ENCODE measurements at regions of chr3 and their contacts with region 1.

Region 1: DNA sequence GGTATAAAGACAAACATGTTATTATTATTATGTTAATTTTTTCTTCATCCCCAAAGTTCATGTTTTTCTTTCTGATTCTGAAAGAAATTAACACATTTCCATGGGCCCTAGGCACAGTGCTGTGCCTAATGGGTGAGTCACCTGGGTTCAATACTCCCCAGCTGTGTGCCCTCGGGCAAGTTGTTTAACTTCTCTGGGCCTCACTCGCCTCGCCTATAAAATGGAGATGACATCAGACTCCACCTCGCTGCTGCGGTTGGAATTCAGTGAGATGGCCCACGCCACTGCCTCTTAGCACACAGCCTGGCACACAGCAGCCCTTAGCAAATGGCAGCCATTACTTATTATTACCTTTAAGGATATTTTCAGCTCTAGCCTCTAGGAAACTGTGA is 22.6 kb downstream of the DNASE1L3 start:
- DNase-seq: no peak
- ATAC-seq: peak; percentile 35
- H3K4me3 ChIP-seq: no peak overlapping the region
- H3K27ac ChIP-seq: no peak overlapping the region
- H3K4me1 ChIP-seq: peaks cover 3% of the 10 kb centered on the region; the same call in 1 of the 2 replicates
- H3K27me3 ChIP-seq: no peaks in the 10 kb centered on the region
- CTCF ChIP-seq: no peak
- EP300 ChIP-seq: no peak
- POLR2A ChIP-seq: no peak
- RAD21 ChIP-seq: no peak

Region 2: DNA sequence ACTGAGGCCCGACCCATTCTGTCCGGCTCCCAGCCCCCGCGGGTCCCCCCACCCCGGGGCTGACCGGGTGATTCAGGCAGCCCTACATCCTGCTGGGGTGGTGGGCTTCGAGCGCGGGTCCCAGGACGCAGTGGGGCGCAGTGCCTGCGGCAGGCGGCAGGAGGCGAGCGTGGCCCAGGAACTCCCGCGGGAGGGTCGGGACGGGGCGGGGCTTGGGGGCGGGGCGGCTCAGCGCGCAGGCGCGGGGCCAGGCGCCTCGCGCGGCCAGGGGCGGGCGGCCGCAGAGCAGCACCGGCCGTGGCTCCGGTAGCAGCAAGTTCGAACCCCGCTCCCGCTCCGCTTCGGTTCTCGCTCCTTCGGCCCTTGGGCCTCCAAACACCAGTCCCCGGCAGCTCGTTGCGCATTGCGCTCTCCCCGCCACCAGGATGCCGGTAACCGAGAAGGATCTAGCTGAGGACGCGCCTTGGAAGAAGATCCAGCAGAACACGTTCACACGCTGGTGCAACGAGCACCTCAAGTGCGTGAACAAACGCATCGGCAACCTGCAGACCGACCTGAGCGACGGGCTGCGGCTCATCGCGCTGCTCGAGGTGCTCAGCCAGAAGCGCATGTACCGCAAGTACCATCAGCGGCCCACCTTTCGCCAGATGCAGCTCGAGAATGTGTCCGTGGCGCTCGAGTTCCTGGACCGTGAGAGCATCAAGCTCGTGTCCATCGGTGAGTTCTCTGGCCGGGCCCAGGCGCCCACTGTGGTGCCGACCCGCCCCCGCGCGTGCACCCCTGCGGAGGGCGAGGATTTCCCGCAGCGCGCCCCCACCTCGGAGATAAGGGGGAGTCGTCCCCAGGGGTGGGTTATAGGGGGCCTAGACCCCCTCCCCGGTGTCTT is 179.8 kb before region 1 on chr3 and contains the start of gene FLNB:
- CTCF ChIA-PET with region 1: interaction called, 11 read pairs
- POLR2A ChIA-PET with region 1: interaction called, 3 read pairs
- RAD21 ChIA-PET with region 1: interaction called, 13 read pairs
- SMC1A ChIA-PET with region 1: interaction called, 3 read pairs
- in situ Hi-C with region 1: no loop called
- intact Hi-C with region 1: no loop called
- DNase-seq: no peak
- ATAC-seq: peak; percentile 81
- H3K4me3 ChIP-seq: peak within 1 kb of the TSS; percentile 77
- H3K27ac ChIP-seq: peak within 1 kb of the TSS; percentile 45
- H3K4me1 ChIP-seq: peaks cover 16% of the 10 kb centered on the region
- H3K27me3 ChIP-seq: no peaks in the 10 kb centered on the region
- CTCF ChIP-seq: peak; percentile 72 to 95 (median 90)
- EP300 ChIP-seq: no peak
- POLR2A ChIP-seq: peak; percentile 90
- RAD21 ChIP-seq: peak; percentile 91
- polyA plus RNA-seq, gene FLNB: 13.6 to 15.8 TPM

Region 3: GRCh38 chr3:58121140-58121539 is 67.0 kb before region 1 on chr3:
- CTCF ChIA-PET with region 1: no interaction called
- POLR2A ChIA-PET with region 1: no interaction called
- RAD21 ChIA-PET with region 1: no interaction called
- SMC1A ChIA-PET with region 1: no interaction called
- in situ Hi-C with region 1: no loop called
- intact Hi-C with region 1: no loop called
- DNase-seq: no peak
- ATAC-seq: no peak
- H3K4me3 ChIP-seq: no peak overlapping the region
- H3K27ac ChIP-seq: no peak overlapping the region
- H3K4me1 ChIP-seq: peaks cover 14% of the 10 kb centered on the region
- H3K27me3 ChIP-seq: no peaks in the 10 kb centered on the region
- CTCF ChIP-seq: no peak
- EP300 ChIP-seq: no peak
- POLR2A ChIP-seq: no peak
- RAD21 ChIP-seq: no peak

Region 4: DNA sequence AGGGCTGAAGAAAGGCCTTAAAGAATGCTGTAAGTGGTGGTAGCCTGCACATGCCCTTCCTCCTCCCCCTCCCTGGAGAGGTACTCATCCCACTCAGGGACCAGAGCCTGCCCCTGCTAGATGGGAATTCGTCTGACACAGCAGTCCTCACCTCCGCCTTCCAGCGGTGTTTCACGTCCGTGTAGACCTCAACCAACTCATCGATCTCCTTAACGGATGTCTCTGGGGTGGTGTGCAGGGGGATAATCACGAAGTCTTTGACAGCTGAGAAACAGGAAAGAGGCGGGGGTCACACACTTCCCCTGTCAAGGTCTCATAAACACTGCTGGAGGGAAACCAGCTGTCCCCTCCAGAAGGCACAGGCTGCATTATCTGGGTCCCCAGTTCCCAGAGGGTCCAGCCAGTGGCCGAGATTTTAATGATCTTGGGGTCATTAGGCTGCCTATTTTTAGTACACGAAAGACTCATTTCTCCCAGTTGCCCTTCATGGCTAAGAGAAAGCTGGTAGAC is 12.7 kb after region 1 on chr3:
- CTCF ChIA-PET with region 1: interaction called, 12 read pairs
- POLR2A ChIA-PET with region 1: interaction called, 491 read pairs
- RAD21 ChIA-PET with region 1: interaction called, 14 read pairs
- SMC1A ChIA-PET with region 1: interaction called, 17 read pairs
- in situ Hi-C with region 1: no loop called
- intact Hi-C with region 1: no loop called
- DNase-seq: no peak
- ATAC-seq: peak; percentile 53
- H3K4me3 ChIP-seq: no peak overlapping the region; the same call in 1 of the 2 replicates
- H3K27ac ChIP-seq: peak overlapping the region; percentile 73
- H3K4me1 ChIP-seq: peaks cover 46% of the 10 kb centered on the region
- H3K27me3 ChIP-seq: no peaks in the 10 kb centered on the region
- CTCF ChIP-seq: no peak
- EP300 ChIP-seq: no peak
- POLR2A ChIP-seq: 0 out of 2 replicates have a peak, but pooled peaks have one; percentile 25
- RAD21 ChIP-seq: no peak

Region 5: GRCh38 chr3:58217209-58217811 is 29.1 kb after region 1 on chr3:
- CTCF ChIA-PET with region 1: interaction called, 655 read pairs
- POLR2A ChIA-PET with region 1: interaction called, 491 read pairs
- RAD21 ChIA-PET with region 1: interaction called, 141 read pairs
- SMC1A ChIA-PET with region 1: interaction called, 191 read pairs
- in situ Hi-C with region 1: loop called (anchors 5 kb)
- intact Hi-C with region 1: loop called (anchors 1 kb)
- DNase-seq: no peak
- ATAC-seq: peak; percentile 59
- H3K4me3 ChIP-seq: no peak overlapping the region
- H3K27ac ChIP-seq: no peak overlapping the region
- H3K4me1 ChIP-seq: peaks cover 56% of the 10 kb centered on the region
- H3K27me3 ChIP-seq: no peaks in the 10 kb centered on the region
- CTCF ChIP-seq: peak; percentile 84 to 94 (median 89)
- EP300 ChIP-seq: 0 out of 4 replicates have a peak, but pooled peaks of 1 of the 2 experiments have one; percentile 19
- POLR2A ChIP-seq: no peak
- RAD21 ChIP-seq: peak; percentile 74

Region 6: GRCh38 chr3:58271901-58272501 is 83.8 kb after region 1 on chr3:
- CTCF ChIA-PET with region 1: no interaction called
- POLR2A ChIA-PET with region 1: no interaction called
- RAD21 ChIA-PET with region 1: interaction called, 3 read pairs
- SMC1A ChIA-PET with region 1: interaction called, 14 read pairs
- in situ Hi-C with region 1: no loop called
- intact Hi-C with region 1: no loop called
- DNase-seq: no peak
- ATAC-seq: no peak
- H3K4me3 ChIP-seq: no peak overlapping the region
- H3K27ac ChIP-seq: no peak overlapping the region
- H3K4me1 ChIP-seq: no peaks in the 10 kb centered on the region
- H3K27me3 ChIP-seq: no peaks in the 10 kb centered on the region
- CTCF ChIP-seq: no peak
- EP300 ChIP-seq: no peak
- POLR2A ChIP-seq: no peak
- RAD21 ChIP-seq: no peak

Region 7: GRCh38 chr3:58414538-58415197 is 226.5 kb after region 1 on chr3:
- CTCF ChIA-PET with region 1: interaction called, 9 read pairs
- POLR2A ChIA-PET with region 1: no interaction called
- RAD21 ChIA-PET with region 1: interaction called, 3 read pairs
- SMC1A ChIA-PET with region 1: interaction called, 3 read pairs
- in situ Hi-C with region 1: loop called (anchors 5 kb)
- intact Hi-C with region 1: loop called (anchors 5 kb)
- DNase-seq: no peak
- ATAC-seq: peak; percentile 74
- H3K4me3 ChIP-seq: no peak overlapping the region
- H3K27ac ChIP-seq: no peak overlapping the region
- H3K4me1 ChIP-seq: peaks cover 9% of the 10 kb centered on the region
- H3K27me3 ChIP-seq: no peaks in the 10 kb centered on the region
- CTCF ChIP-seq: peak; percentile 63 to 72 (median 71)
- EP300 ChIP-seq: no peak
- POLR2A ChIP-seq: no peak
- RAD21 ChIP-seq: peak; percentile 80

Region 8: DNA sequence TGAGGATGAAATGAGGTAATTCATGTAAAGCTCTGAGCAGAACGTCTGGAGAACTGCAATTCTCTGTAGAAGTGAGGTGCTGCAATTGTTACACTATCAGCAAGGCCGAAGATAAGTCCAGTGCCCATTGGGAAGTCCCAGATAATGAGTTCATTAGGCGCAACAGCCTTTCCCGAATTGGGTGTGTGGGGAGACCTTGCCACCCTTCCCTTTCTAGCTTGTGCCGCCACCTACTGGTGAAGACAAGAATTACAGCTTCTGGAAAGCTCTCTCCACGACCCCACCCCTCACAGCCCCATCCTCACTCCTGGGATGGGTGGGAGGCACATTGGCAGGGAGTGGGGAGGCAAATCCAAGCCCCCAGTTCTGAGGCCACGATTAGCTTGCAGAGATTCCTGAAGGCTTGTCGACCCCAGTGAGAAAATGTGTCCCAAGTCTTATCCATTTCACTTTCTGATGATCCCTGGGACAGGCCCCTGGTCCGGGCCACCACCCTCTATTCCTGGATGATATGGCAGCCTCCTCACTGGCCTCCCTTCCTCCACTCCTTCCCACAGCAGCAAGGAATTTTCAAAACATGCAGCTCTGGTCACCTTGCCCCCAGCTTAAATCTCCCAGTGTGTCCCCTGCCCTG is 442.0 kb after region 1 on chr3:
- CTCF ChIA-PET with region 1: interaction called, 15 read pairs
- POLR2A ChIA-PET with region 1: no interaction called
- RAD21 ChIA-PET with region 1: interaction called, 3 read pairs
- SMC1A ChIA-PET with region 1: no interaction called
- in situ Hi-C with region 1: loop called (anchors 10 kb)
- intact Hi-C with region 1: no loop called
- DNase-seq: no peak
- ATAC-seq: peak; percentile 87
- H3K4me3 ChIP-seq: no peak overlapping the region
- H3K27ac ChIP-seq: no peak overlapping the region
- H3K4me1 ChIP-seq: no peaks in the 10 kb centered on the region
- H3K27me3 ChIP-seq: peaks cover 2 to 3% of the 10 kb centered on the region in 2 experiments; a peak in 1 of 4 replicates
- CTCF ChIP-seq: peak; percentile 87 to 89 (median 88)
- EP300 ChIP-seq: no peak
- POLR2A ChIP-seq: no peak
- RAD21 ChIP-seq: peak; percentile 83

Measured in GM12878 (cell line).